CD8-positive, alpha-beta T cell (primary cell): ENCODE measurements at regions of chr11 and their contacts with region 1.

Region 1: GRCh38 chr11:118198370-118198769 is 21.9 kb upstream of the SCN2B start:
- DNase-seq: peak; percentile 68 to 89 (median 88)
- ATAC-seq: peak; percentile 18
- H3K4me3 ChIP-seq: no peak overlapping the region
- H3K4me3 Mint-ChIP-seq: peak overlapping the region; percentile 27
- H3K27ac ChIP-seq: no peak overlapping the region
- H3K27ac Mint-ChIP-seq: peak overlapping the region; percentile 81
- H3K4me1 ChIP-seq: peaks cover 46% of the 10 kb centered on the region
- H3K4me1 Mint-ChIP-seq: peaks cover 11% of the 10 kb centered on the region
- H3K27me3 ChIP-seq: no peaks in the 10 kb centered on the region
- H3K27me3 Mint-ChIP-seq: no peaks in the 10 kb centered on the region
- CTCF ChIP-seq: peak; percentile 95

Region 2: DNA sequence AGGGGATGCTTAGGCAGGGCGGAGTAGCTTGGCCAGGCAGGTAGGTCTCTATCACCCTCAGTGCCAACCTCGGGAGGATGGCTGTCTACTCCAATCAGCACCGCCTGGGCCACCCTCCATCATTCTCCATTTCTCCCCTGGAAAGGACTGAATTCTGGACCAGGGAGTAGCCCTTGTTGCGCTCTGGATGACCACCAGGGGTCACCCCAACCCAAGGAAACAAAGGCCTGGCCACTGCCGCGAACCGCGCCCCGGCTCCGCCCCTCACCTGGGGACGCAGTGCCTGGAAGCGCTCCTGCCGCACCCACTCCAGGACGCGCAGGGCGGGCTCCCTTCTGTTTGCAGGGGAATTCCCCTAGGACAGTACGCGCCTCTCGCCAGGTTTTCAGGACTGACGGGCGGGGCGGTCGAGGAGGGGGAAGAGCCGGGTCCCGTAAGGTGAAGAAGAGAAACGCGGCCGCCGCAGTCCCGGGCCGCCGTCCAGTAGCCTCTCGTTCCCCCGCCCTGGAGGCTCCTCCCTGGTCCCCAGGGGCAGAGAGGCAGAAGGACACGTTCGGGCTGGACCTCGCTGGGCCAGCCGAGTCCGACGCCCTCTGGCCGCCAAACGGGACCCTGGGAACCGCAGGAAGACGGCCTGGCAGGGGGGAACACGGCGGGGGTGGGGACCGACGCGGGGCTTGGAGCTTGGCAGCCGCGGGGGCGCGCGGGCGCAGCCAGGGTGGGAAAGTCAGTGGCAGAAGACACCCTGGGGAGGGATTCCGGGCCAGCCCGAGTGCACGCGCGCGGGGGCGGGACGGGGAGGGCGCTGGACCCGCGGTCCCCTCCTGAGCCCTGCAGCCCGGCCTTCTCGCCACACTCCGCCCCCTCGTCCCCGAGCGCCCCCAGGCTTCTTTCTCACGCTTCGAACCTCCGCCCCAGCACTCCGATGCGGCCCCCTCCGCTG is 52.8 kb before region 1 on chr11:
- CTCF ChIA-PET with region 1: interaction called, 9 read pairs
- POLR2A ChIA-PET with region 1: no interaction called
- intact Hi-C with region 1: loop called in 1 of 2 experiments (anchors 1 kb)
- DNase-seq: peak; percentile 73 to 91 (median 88)
- ATAC-seq: peak; percentile 97
- H3K4me3 ChIP-seq: peak overlapping the region; percentile 57 to 63
- H3K4me3 Mint-ChIP-seq: peak overlapping the region; percentile 86
- H3K27ac ChIP-seq: no peak overlapping the region
- H3K27ac Mint-ChIP-seq: no peak overlapping the region
- H3K4me1 ChIP-seq: peaks cover 3% of the 10 kb centered on the region
- H3K4me1 Mint-ChIP-seq: peaks cover 3% of the 10 kb centered on the region
- H3K27me3 ChIP-seq: peaks cover 11% of the 10 kb centered on the region in 2 experiments
- H3K27me3 Mint-ChIP-seq: peaks cover 35% of the 10 kb centered on the region
- CTCF ChIP-seq: peak; percentile 67

Region 3: GRCh38 chr11:118211006-118211405 is 12.6 kb after region 1 on chr11:
- CTCF ChIA-PET with region 1: interaction called, 28 read pairs
- POLR2A ChIA-PET with region 1: interaction called, 13 read pairs
- intact Hi-C with region 1: loop called (anchors 2 kb)
- DNase-seq: no peak
- ATAC-seq: no peak
- H3K4me3 ChIP-seq: no peak overlapping the region
- H3K4me3 Mint-ChIP-seq: no peak overlapping the region
- H3K27ac ChIP-seq: no peak overlapping the region
- H3K27ac Mint-ChIP-seq: peak overlapping the region; percentile 52
- H3K4me1 ChIP-seq: peaks cover 60% of the 10 kb centered on the region
- H3K4me1 Mint-ChIP-seq: peaks cover 84% of the 10 kb centered on the region
- H3K27me3 ChIP-seq: no peaks in the 10 kb centered on the region
- H3K27me3 Mint-ChIP-seq: no peaks in the 10 kb centered on the region
- CTCF ChIP-seq: no peak

Region 4: DNA sequence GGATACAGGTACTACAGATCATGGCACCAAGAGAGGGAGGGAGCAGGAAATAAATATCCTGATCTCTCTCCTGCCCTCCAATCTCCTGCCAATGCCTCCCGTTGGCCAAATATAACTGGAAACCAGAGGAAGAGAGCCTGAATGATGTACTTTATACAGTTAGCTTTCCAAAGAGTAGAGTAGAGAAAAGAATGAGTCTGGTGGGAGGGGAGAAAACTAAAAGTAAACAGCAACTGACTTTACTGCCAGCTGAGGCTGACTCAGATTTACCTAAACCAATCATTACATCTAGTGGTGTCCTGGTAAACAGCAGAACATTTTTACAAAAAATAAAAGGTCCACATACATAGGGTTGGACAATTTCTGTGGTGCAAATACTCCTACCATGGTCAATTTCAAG is 48.7 kb after region 1 on chr11:
- CTCF ChIA-PET with region 1: interaction called, 25 read pairs
- POLR2A ChIA-PET with region 1: interaction called, 11 read pairs
- intact Hi-C with region 1: loop called in 1 of 2 experiments (anchors 2 kb)
- DNase-seq: no peak
- ATAC-seq: peak; percentile 19
- H3K4me3 ChIP-seq: no peak overlapping the region
- H3K4me3 Mint-ChIP-seq: no peak overlapping the region
- H3K27ac ChIP-seq: peak overlapping the region in 1 of 2 experiments; percentile 46
- H3K27ac Mint-ChIP-seq: peak overlapping the region; percentile 87
- H3K4me1 ChIP-seq: peaks cover 1% of the 10 kb centered on the region
- H3K4me1 Mint-ChIP-seq: peaks cover 66% of the 10 kb centered on the region
- H3K27me3 ChIP-seq: no peaks in the 10 kb centered on the region
- H3K27me3 Mint-ChIP-seq: no peaks in the 10 kb centered on the region
- CTCF ChIP-seq: no peak

Region 5: GRCh38 chr11:118277306-118277705 is 78.9 kb after region 1 on chr11:
- CTCF ChIA-PET with region 1: interaction called, 29 read pairs
- POLR2A ChIA-PET with region 1: interaction called, 4 read pairs
- intact Hi-C with region 1: no loop called
- DNase-seq: no peak
- ATAC-seq: no peak
- H3K4me3 ChIP-seq: no peak overlapping the region
- H3K4me3 Mint-ChIP-seq: no peak overlapping the region
- H3K27ac ChIP-seq: no peak overlapping the region
- H3K27ac Mint-ChIP-seq: no peak overlapping the region
- H3K4me1 ChIP-seq: peaks cover 9% of the 10 kb centered on the region
- H3K4me1 Mint-ChIP-seq: peaks cover 20% of the 10 kb centered on the region
- H3K27me3 ChIP-seq: no peaks in the 10 kb centered on the region
- H3K27me3 Mint-ChIP-seq: no peaks in the 10 kb centered on the region
- CTCF ChIP-seq: no peak

Region 6: DNA sequence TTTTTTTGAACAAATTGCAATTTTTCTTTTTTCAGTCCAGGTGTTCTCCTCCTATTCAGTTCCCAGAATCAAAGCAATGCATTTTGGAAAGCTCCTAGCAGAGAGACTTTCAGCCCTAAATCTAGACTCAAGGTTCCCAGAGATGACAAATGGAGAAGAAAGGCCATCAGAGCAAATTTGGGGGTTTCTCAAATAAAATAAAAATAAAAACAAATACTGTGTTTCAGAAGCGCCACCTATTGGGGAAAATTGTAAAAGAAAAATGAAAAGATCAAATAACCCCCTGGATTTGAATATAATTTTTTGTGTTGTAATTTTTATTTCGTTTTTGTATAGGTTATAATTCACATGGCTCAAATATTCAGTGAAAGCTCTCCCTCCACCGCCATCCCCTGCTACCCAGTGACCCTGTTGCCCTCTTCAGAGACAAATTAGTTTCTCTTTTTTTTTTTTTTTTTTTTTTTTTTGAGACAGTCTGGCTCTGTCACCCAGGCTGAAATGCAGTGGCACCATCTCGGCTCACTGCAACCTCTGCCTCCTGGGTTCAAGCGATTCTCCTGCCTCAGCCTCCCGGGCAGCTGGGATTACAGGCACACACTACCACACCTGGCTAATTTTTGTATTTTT is 154.8 kb after region 1 on chr11:
- CTCF ChIA-PET with region 1: interaction called, 43 read pairs
- POLR2A ChIA-PET with region 1: no interaction called
- intact Hi-C with region 1: loop called (anchors 1 to 2 kb)
- DNase-seq: peak in 2 of 9 experiments; percentile 68 to 79
- ATAC-seq: peak; percentile 35
- H3K4me3 ChIP-seq: no peak overlapping the region
- H3K4me3 Mint-ChIP-seq: peak overlapping the region; percentile 43
- H3K27ac ChIP-seq: peak overlapping the region; percentile 13 to 56
- H3K27ac Mint-ChIP-seq: peak overlapping the region; percentile 92
- H3K4me1 ChIP-seq: peaks cover 29% of the 10 kb centered on the region
- H3K4me1 Mint-ChIP-seq: peaks cover 42% of the 10 kb centered on the region
- H3K27me3 ChIP-seq: no peaks in the 10 kb centered on the region
- H3K27me3 Mint-ChIP-seq: no peaks in the 10 kb centered on the region
- CTCF ChIP-seq: peak; percentile 82